ENCODE measurements at regions of chr16 and their contacts with region 1.

Region 1: DNA sequence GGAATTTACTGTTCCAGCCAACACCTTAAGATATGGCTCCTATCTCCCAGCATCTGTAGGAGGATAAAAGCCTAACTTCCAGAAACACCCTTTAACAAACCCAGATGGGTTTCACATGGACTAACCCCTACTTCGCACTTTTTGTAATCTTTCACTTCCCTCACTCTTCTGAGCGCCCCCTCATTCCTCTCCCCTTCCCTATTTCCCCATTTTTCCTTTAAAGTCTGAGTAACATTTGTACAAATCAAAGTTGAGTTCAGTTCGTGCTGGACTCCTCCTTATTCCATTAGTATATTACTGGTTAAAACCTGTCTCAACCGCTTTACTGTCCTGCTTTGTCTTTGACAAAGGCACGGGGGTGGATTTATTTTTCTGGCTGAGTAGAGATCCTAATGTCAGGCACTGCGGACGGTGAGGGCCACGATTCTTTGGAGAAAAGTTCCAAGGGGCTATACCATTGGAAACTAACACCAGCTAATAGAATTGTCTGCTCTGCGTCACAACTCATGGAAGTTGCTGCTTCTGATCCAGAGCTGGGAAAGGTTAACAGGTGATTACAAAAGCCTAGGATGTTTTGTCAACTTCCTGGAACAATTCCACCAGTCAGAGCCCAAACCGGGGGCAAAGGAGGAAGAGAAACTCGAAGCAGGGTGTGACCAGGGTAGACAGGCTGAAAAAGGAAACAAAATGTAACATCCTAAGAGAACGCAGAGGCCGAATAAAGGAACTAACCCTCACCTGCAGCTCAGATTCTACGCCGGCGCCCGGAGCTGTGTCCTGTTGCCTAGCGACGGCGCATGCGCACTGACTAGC is 12.5 kb downstream of the TAT start:
- DNase-seq: no peak
- ATAC-seq: peak; percentile 9 to 30
- H3K4me3 ChIP-seq: peak overlapping the region; percentile 56
- H3K27ac ChIP-seq: peak overlapping the region; percentile 75 to 89
- H3K4me1 ChIP-seq: peaks cover 12% of the 10 kb centered on the region
- CTCF ChIP-seq: no peak
- EP300 ChIP-seq: no peak
- POLR2A ChIP-seq: no peak
- RAD21 ChIP-seq: no peak

Region 2: GRCh38 chr16:71230122-71230845 is 334.1 kb before region 1 on chr16 and contains the start of gene HYDIN:
- CTCF ChIA-PET with region 1: no interaction called
- POLR2A ChIA-PET with region 1: no interaction called
- DNase-seq: peak; percentile 67 to 78
- ATAC-seq: peak; percentile 97 to 98
- H3K4me3 ChIP-seq: peak within 1 kb of the TSS; percentile 44
- H3K27ac ChIP-seq: no peak within 1 kb of the TSS
- H3K4me1 ChIP-seq: no peaks in the 10 kb centered on the region
- CTCF ChIP-seq: no peak
- EP300 ChIP-seq: no peak
- POLR2A ChIP-seq: no peak
- RAD21 ChIP-seq: no peak
- polyA plus RNA-seq, gene HYDIN: 0.30 and 0.41 TPM in 2 replicates

Region 3: GRCh38 chr16:71552698-71553451 is 11.5 kb before region 1 on chr16:
- CTCF ChIA-PET with region 1: interaction called, 11 read pairs
- POLR2A ChIA-PET with region 1: interaction called, 4 read pairs
- DNase-seq: peak in 1 of 2 experiments; percentile 42
- ATAC-seq: peak; percentile 70 to 80; a peak in 5 of 6 replicates
- H3K4me3 ChIP-seq: no peak overlapping the region
- H3K27ac ChIP-seq: no peak overlapping the region
- H3K4me1 ChIP-seq: no peaks in the 10 kb centered on the region
- CTCF ChIP-seq: no peak
- EP300 ChIP-seq: no peak
- POLR2A ChIP-seq: no peak
- RAD21 ChIP-seq: peak in 1 of 2 experiments; percentile 21; a peak in 1 of 5 replicates

Region 4: GRCh38 chr16:71622088-71622487 is 57.7 kb after region 1 on chr16:
- CTCF ChIA-PET with region 1: interaction called, 17 read pairs
- POLR2A ChIA-PET with region 1: no interaction called
- DNase-seq: no peak
- ATAC-seq: no peak
- H3K4me3 ChIP-seq: no peak overlapping the region
- H3K27ac ChIP-seq: no peak overlapping the region
- H3K4me1 ChIP-seq: peaks cover 3% of the 10 kb centered on the region; the same call in 1 of the 3 replicates
- CTCF ChIP-seq: no peak
- EP300 ChIP-seq: no peak
- POLR2A ChIP-seq: no peak
- RAD21 ChIP-seq: no peak

Region 5: DNA sequence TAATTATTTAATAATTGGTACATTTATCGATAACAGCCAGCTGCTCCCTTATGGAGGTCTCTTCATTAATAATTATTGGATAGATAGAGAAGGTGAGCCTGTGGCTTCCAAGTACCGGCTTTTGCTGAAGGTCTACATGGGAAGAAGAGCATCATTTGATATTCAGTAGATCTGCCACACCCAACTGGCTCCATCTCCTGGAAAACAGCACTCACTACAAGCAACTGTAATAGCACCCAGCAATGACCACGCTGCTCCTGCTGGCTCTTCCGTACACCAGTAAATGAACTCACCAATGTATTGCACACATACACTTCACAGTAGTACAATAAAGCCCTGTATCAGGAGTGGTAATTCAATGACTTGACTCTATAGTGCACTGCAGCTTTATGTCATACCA is 81.1 kb after region 1 on chr16:
- CTCF ChIA-PET with region 1: interaction called, 14 read pairs
- POLR2A ChIA-PET with region 1: no interaction called
- DNase-seq: peak; percentile 63 to 70
- ATAC-seq: peak; percentile 90 to 91
- H3K4me3 ChIP-seq: no peak overlapping the region
- H3K27ac ChIP-seq: no peak overlapping the region
- H3K4me1 ChIP-seq: no peaks in the 10 kb centered on the region
- CTCF ChIP-seq: peak; percentile 39
- EP300 ChIP-seq: no peak
- POLR2A ChIP-seq: no peak
- RAD21 ChIP-seq: peak; percentile 18 to 44; a peak in 2 of 5 replicates